Dendritic cell treated with granulocyte-macrophage colony-stimulating factor and Interleukin-4, amounts not matched to agents 40 ng/mL and 50 ng/mL, for 4 days (primary cell): ENCODE measurements at regions of chr1 and their contacts with region 1.

Region 1: GRCh38 chr1:248807067-248807737 is 18.5 kb downstream of the SH3BP5L start:
- H3K4me3 Mint-ChIP-seq: no peak overlapping the region
- H3K27ac Mint-ChIP-seq: no peak overlapping the region
- H3K4me1 Mint-ChIP-seq: peaks cover 71% of the 10 kb centered on the region
- H3K27me3 Mint-ChIP-seq: no peaks in the 10 kb centered on the region

Region 2: DNA sequence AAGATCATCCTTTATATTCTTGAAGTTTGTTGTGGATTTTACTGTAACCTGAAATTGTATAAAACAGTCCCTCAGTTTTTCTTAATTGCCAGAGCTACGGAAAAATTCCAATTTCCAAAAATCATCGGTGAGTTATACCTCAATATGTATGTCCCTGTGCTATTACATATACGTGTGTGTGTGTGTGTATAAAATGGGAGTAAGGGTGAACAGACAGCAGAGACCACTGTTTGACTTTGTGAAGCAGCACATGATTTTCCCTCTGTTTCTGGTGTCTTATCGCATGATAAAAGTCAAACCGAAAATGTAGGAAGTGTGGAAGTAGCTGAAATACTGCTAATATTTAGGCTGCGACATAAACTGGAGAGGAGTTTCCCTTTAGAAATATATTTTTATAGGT is 403.2 kb before region 1 on chr1:
- intact Hi-C with region 1: loop called (anchors 2 kb)
- H3K4me3 Mint-ChIP-seq: no peak overlapping the region
- H3K27ac Mint-ChIP-seq: no peak overlapping the region
- H3K4me1 Mint-ChIP-seq: no peaks in the 10 kb centered on the region
- H3K27me3 Mint-ChIP-seq: no peaks in the 10 kb centered on the region

Region 3: GRCh38 chr1:248622570-248623001 is 184.6 kb before region 1 on chr1:
- intact Hi-C with region 1: loop called (anchors 1 kb)
- H3K4me3 Mint-ChIP-seq: no peak overlapping the region
- H3K27ac Mint-ChIP-seq: no peak overlapping the region
- H3K4me1 Mint-ChIP-seq: no peaks in the 10 kb centered on the region
- H3K27me3 Mint-ChIP-seq: no peaks in the 10 kb centered on the region

Region 4: GRCh38 chr1:248695451-248696132 is 111.6 kb before region 1 on chr1:
- intact Hi-C with region 1: loop called (anchors 2 kb)
- H3K4me3 Mint-ChIP-seq: no peak overlapping the region
- H3K27ac Mint-ChIP-seq: no peak overlapping the region
- H3K4me1 Mint-ChIP-seq: peaks cover 27% of the 10 kb centered on the region
- H3K27me3 Mint-ChIP-seq: peaks cover 6% of the 10 kb centered on the region

Region 5: GRCh38 chr1:248703674-248704073 is 103.5 kb before region 1 on chr1:
- intact Hi-C with region 1: loop called (anchors 2 kb)
- H3K4me3 Mint-ChIP-seq: no peak overlapping the region
- H3K27ac Mint-ChIP-seq: no peak overlapping the region
- H3K4me1 Mint-ChIP-seq: peaks cover 14% of the 10 kb centered on the region
- H3K27me3 Mint-ChIP-seq: no peaks in the 10 kb centered on the region

Region 6: GRCh38 chr1:248841702-248842395 is 34.6 kb after region 1 on chr1:
- intact Hi-C with region 1: no loop called
- H3K4me3 Mint-ChIP-seq: no peak overlapping the region
- H3K27ac Mint-ChIP-seq: peak overlapping the region; percentile 11
- H3K4me1 Mint-ChIP-seq: peaks cover 35% of the 10 kb centered on the region
- H3K27me3 Mint-ChIP-seq: no peaks in the 10 kb centered on the region